ENCODE measurements at regions of chr1 and their contacts with region 1.

Region 1: GRCh38 chr1:74197657-74198552 is at the starts of genes FPGT and LRRIQ3:
- DNase-seq: peak; percentile 92 to 98 (median 95)
- ATAC-seq: peak; percentile 96
- H3K4me3 ChIP-seq: peak within 1 kb of the TSS; percentile 62 to 82
- H3K4me3 Mint-ChIP-seq: peak within 1 kb of the TSS; percentile 89
- H3K27ac ChIP-seq: peak within 1 kb of the TSS; percentile 79 to 82
- H3K27ac Mint-ChIP-seq: peak within 1 kb of the TSS; percentile 91
- H3K4me1 ChIP-seq: peaks cover 18% of the 10 kb centered on the region
- H3K4me1 Mint-ChIP-seq: peaks cover 21% of the 10 kb centered on the region
- H3K27me3 ChIP-seq: no peaks in the 10 kb centered on the region
- H3K27me3 Mint-ChIP-seq: no peaks in the 10 kb centered on the region
- CTCF ChIP-seq: no peak
- total RNA-seq, gene FPGT: 1.7 to 2.0 TPM
- total RNA-seq, gene LRRIQ3: not detected

Region 2: DNA sequence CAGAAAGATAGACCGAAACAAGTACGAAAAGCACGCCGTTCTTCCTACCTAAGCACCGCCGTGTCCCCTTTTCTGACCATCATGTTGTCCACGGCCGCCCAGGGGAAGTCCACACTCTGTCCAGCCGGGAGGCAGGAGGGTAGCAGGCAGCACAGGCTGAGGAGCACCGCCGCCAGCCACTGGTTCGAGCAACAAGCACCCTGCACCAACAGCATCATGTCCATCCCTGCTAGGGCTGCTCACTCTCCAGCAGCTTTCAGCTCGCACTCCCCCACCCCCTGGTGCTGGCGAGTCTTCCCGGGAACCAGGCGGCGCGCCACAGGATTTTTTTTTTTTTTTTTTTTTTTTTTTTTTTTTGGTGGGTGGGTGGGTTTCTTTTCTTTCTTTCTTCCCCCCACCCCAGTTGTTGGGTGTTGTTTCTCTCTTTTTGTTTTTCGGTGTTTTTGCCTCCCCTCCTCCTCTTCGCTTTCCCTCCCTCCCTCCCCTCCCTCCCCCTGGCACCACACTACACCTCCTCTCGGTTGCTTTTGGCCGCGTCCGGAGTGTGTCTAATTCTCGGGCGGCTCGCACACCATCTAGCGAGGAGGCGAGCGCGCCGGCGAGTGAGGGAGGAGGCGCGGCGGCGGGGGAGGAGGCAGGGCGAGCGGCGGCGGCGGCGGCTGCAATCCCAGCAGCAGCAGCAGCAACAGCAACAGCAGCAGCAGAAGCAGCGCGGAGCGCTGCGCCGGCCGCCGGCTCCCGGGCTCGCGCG is 1915.5 kb before region 1 on chr1 and contains the start of gene NEGR1:
- CTCF ChIA-PET with region 1: no interaction called
- POLR2A ChIA-PET with region 1: no interaction called
- intact Hi-C with region 1: loop called in 1 of 2 experiments (anchors 5 kb)
- DNase-seq: peak; percentile 20 to 77 (median 61)
- ATAC-seq: peak; percentile 75
- H3K4me3 ChIP-seq: peak within 1 kb of the TSS; percentile 66 to 80
- H3K4me3 Mint-ChIP-seq: peak within 1 kb of the TSS; percentile 86
- H3K27ac ChIP-seq: peak within 1 kb of the TSS; percentile 46 to 81
- H3K27ac Mint-ChIP-seq: peak within 1 kb of the TSS; percentile 55
- H3K4me1 ChIP-seq: peaks cover 4% of the 10 kb centered on the region
- H3K4me1 Mint-ChIP-seq: peaks cover 17% of the 10 kb centered on the region
- H3K27me3 ChIP-seq: no peaks in the 10 kb centered on the region
- H3K27me3 Mint-ChIP-seq: no peaks in the 10 kb centered on the region
- CTCF ChIP-seq: no peak
- total RNA-seq, gene NEGR1: not detected

Region 3: DNA sequence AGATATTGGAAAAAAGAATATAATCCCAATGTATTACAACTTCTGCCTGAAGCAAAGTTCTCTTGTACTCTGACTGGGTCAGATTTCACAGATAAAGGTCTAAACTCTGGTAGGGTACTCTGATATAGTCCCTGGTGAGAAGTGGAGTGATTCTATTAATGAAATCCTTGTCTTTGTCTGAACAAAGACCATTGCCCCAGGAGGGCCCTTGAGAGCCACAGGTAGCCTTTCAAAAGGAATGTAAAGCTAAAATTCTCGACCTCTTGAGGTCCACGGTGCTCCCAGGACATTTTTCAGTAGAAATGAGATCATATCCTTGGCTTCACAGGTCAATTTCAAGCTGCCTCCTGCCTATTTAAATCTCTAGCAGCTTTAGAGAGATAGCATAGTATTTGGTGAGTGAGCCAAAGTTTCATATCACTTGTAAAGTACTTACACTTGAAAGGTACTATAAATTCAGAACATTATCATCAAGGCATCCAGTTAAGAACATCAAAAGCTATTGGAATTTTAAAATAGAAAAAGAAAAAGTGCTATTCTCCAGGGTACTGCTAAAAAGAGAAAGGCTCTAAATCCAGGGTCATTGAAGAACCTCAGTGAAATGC is 47.4 kb after region 1 on chr1:
- CTCF ChIA-PET with region 1: no interaction called
- POLR2A ChIA-PET with region 1: no interaction called
- intact Hi-C with region 1: no loop called
- DNase-seq: no peak
- ATAC-seq: no peak
- H3K4me3 ChIP-seq: no peak overlapping the region
- H3K4me3 Mint-ChIP-seq: no peak overlapping the region
- H3K27ac ChIP-seq: no peak overlapping the region
- H3K27ac Mint-ChIP-seq: no peak overlapping the region
- H3K4me1 ChIP-seq: no peaks in the 10 kb centered on the region
- H3K4me1 Mint-ChIP-seq: no peaks in the 10 kb centered on the region
- H3K27me3 ChIP-seq: no peaks in the 10 kb centered on the region
- H3K27me3 Mint-ChIP-seq: no peaks in the 10 kb centered on the region
- CTCF ChIP-seq: no peak

Region 4: DNA sequence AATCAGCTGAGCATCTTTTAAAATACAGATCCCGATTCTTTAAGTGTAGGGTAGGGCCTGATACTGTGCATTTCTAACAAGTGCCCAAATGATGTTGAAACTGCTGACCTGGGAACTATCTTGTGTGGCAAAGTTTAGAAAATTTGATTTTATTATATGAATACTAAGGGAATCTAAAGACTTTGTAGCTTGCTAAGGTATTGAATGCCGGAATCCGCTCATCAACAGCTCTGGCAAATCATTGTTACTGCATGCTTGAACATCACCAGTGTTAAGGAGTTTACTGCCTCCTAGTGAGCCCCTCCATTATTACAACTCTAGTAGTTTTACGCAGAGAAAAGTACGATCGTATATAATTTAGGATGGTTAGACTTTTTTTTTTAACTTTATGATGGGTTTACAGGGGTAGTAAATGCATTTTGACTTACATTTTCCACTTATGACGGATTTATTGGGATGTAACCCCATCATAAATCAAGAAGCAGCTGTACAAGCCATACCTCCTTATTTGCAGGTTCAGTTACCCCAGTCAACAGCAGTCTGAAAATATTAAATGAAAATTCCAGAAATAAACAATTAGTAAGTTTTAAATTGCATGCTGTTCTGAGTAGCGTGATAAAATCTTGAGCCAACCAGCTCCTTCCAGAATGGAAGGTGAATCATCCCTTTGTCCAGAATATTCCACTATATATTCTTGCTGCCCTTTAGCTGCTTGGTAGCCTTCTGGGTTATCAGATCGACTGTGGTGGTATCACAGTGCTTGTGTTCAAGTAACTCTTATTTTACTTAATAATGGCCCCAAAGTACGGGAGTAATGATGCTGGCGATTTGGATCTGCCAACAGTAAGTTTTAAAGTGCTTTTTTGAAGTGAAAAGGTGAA is 535.9 kb after region 1 on chr1:
- CTCF ChIA-PET with region 1: no interaction called
- POLR2A ChIA-PET with region 1: interaction called, 3 read pairs
- intact Hi-C with region 1: loop called (anchors 1 to 2 kb)
- DNase-seq: peak in 5 of 9 experiments; percentile 10 to 83 (median 39)
- ATAC-seq: peak; percentile 67
- H3K4me3 ChIP-seq: peak overlapping the region; percentile 79 to 89
- H3K4me3 Mint-ChIP-seq: peak overlapping the region; percentile 98
- H3K27ac ChIP-seq: peak overlapping the region; percentile 75 to 83
- H3K27ac Mint-ChIP-seq: peak overlapping the region; percentile 95
- H3K4me1 ChIP-seq: peaks cover 21% of the 10 kb centered on the region
- H3K4me1 Mint-ChIP-seq: peaks cover 35% of the 10 kb centered on the region
- H3K27me3 ChIP-seq: no peaks in the 10 kb centered on the region
- H3K27me3 Mint-ChIP-seq: no peaks in the 10 kb centered on the region
- CTCF ChIP-seq: peak; percentile 84

Region 5: GRCh38 chr1:75724472-75725022 is 1526.6 kb after region 1 on chr1 and contains the start of gene ACADM:
- CTCF ChIA-PET with region 1: no interaction called
- POLR2A ChIA-PET with region 1: no interaction called
- intact Hi-C with region 1: loop called (anchors 5 to 10 kb)
- DNase-seq: peak; percentile 58 to 90 (median 79)
- ATAC-seq: peak; percentile 96
- H3K4me3 ChIP-seq: peak within 1 kb of the TSS; percentile 98
- H3K4me3 Mint-ChIP-seq: peak within 1 kb of the TSS; percentile 98
- H3K27ac ChIP-seq: peak within 1 kb of the TSS; percentile 78 to 82
- H3K27ac Mint-ChIP-seq: peak within 1 kb of the TSS; percentile 97
- H3K4me1 ChIP-seq: peaks cover 34% of the 10 kb centered on the region
- H3K4me1 Mint-ChIP-seq: peaks cover 60% of the 10 kb centered on the region
- H3K27me3 ChIP-seq: no peaks in the 10 kb centered on the region
- H3K27me3 Mint-ChIP-seq: no peaks in the 10 kb centered on the region
- CTCF ChIP-seq: no peak
- total RNA-seq, gene ACADM: 5.8 to 6.0 TPM

Region 6: DNA sequence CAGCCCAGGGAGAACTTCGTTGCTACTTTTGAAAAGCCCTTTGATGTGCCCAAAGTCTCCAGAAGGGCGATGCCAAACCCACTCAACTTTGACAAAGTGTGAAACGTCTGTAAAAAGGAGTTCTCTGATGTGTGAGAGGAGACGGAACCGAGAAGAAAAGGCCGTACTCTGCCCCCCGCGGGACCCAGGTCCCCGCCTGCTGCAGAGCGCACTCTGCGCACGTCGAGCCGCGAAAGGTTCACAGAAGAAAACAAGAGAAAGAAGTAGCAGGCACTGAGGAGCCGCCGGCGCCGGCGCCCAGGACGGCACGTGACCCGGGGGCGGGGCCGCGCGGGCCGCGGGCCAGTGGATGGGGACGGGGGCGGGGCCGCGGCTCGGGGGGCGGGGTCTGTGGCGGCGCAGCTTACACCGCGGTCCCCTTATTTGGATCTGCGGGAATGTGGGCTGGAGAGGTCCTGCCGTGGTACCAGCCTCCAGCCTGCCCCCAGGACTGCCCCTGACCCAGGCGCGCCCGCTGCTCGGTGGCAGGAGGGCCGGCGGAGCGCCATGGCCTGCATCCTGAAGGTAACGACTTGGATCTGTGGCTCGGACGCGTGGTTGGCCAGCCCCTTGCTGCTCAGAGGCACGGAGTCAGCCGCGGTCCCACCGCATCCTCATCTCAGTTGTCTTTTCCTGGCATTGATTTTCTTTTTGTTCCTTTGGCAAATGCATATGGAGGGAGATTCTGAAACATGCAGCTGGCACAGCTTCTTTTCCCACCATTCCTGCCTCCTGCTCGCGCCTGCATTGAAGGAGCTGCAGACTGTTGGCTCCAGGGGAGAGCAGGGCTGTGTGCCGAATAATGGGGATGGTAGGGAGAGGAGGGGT is 1876.6 kb after region 1 on chr1 and contains the start of gene ST6GALNAC3:
- CTCF ChIA-PET with region 1: no interaction called
- POLR2A ChIA-PET with region 1: no interaction called
- intact Hi-C with region 1: loop called in 1 of 2 experiments (anchors 10 kb)
- DNase-seq: peak; percentile 54 to 86 (median 77)
- ATAC-seq: peak; percentile 95
- H3K4me3 ChIP-seq: peak within 1 kb of the TSS; percentile 74 to 79
- H3K4me3 Mint-ChIP-seq: peak within 1 kb of the TSS; percentile 87
- H3K27ac ChIP-seq: peak within 1 kb of the TSS; percentile 34 to 56
- H3K27ac Mint-ChIP-seq: peak within 1 kb of the TSS; percentile 83
- H3K4me1 ChIP-seq: peaks cover 15% of the 10 kb centered on the region
- H3K4me1 Mint-ChIP-seq: peaks cover 29% of the 10 kb centered on the region
- H3K27me3 ChIP-seq: no peaks in the 10 kb centered on the region
- H3K27me3 Mint-ChIP-seq: peaks cover 5% of the 10 kb centered on the region
- CTCF ChIP-seq: no peak
- total RNA-seq, gene ST6GALNAC3: 1.4 to 2.3 TPM